Right ventricle myocardium inferior (tissue), 1 donor: ENCODE measurements at regions of chr11 and their contacts with region 1.

Region 1: DNA sequence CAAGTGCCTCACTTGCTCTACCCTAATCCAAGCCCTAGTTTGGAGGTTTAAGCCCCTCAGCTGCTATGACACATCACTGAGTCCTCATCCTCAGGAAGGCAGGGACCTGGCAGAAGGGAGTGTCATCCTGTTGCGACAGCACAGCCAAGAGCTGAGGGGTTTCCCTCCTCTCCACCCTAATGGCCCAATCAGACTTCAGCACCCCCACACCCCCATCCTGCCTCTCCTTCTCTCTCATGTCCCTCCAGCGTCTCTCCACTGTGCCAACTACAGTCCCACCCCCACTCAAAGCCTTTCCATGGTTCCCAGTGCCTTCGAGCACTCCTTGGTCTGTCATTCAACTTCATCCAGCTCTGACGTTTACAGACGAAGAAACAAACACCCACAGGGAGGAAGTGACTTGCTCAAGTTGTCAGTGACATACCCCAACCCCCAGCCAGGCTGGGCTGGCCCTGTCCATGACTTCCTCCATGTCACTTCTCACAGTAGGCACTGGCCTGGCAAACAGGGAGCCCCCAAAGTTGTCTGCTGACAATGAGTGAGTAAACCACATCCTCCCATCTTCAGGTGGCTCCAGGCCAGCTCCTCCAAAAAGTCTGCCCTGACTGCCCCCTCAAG is 15.6 kb downstream of the ARAP1 start:
- DNase-seq: peak; percentile 89
- ATAC-seq: peak; percentile 47

Region 2: GRCh38 chr11:72776844-72777761 is 40.5 kb after region 1 on chr11:
- intact Hi-C with region 1: loop called (anchors 5 kb)
- DNase-seq: peak; percentile 79
- ATAC-seq: peak; percentile 71